ENCODE measurements at regions of chr5 and their contacts with region 1.

Region 1: GRCh38 chr5:59126708-59127573 is 544.1 kb downstream of the RAB3C start:
- DNase-seq: peak; percentile 34
- H3K4me3 Mint-ChIP-seq: no peak overlapping the region
- H3K27ac Mint-ChIP-seq: no peak overlapping the region
- H3K4me1 Mint-ChIP-seq: peaks cover 15% of the 10 kb centered on the region
- H3K27me3 Mint-ChIP-seq: no peaks in the 10 kb centered on the region

Region 2: DNA sequence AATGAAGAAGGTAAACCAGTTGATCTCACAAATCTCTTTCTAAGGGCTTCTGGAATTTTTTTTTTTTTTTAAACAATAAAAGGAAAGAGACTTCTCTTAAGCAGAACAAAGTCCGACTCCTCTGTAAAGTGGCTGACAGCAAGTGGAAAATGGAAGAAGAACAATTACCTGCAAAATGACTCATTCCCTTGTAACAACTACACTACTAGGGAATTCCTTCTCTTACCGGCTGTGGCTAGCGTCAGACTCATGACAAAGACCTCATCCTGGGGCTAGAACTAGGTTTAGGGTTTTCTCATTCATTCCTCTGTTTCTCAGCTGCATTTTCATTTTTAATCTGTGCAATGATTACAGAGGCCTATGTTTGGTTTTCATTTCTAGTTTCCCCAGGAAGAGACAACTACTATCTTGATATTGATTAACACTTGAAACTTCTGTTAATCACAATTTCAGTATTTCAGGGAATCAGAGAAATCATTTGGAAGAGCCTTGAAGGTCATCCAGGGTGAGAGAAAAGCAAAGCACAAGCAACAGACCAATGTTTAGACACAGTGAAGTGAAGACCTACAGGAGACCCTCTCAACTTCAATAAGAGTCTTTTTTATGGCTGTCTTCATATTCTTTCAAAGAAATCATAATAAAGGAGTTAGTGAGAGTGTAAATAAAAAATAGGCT is 106.2 kb before region 1 on chr5:
- intact Hi-C with region 1: loop called (anchors 1 kb)
- DNase-seq: no peak
- H3K4me3 Mint-ChIP-seq: peak overlapping the region; percentile 32
- H3K27ac Mint-ChIP-seq: peak overlapping the region; percentile 93
- H3K4me1 Mint-ChIP-seq: peaks cover 54% of the 10 kb centered on the region
- H3K27me3 Mint-ChIP-seq: no peaks in the 10 kb centered on the region

Region 3: DNA sequence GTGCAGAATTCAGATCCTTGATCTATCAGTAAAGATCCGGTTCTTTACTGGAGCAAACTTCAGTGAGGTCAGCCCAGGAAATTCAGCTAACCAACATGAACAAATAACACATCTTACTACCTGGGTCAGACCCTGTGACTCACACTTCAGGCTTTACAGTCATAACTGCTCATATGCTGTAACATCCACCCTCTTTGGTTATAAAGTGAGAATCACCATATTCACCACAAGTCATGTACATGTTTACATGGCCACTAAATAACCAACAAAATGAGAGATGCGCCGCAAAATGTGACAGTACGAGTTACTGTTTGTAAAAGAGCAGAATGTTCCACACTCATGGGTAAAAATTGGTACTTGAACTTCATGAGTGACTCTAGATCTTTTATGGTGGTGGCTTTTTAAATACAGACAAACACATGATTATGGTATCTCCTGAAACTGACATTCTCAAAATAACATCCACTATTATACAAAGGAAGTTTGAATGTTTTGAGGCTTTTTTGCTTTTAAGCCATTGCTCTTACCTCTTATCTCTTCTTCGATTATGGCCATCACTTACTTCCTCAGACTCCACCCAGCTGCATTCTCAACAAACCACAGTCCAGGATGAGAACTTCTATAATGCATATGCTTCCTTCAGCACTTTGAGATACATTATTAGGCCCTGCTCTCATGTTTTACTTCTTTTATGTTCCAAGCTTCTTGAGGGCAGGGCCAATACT is 27.5 kb before region 1 on chr5:
- intact Hi-C with region 1: loop called (anchors 1 kb)
- DNase-seq: peak; percentile 62
- H3K4me3 Mint-ChIP-seq: peak overlapping the region; percentile 22
- H3K27ac Mint-ChIP-seq: peak overlapping the region; percentile 85
- H3K4me1 Mint-ChIP-seq: peaks cover 80% of the 10 kb centered on the region
- H3K27me3 Mint-ChIP-seq: no peaks in the 10 kb centered on the region

Region 4: GRCh38 chr5:59143926-59144333 is 17.0 kb after region 1 on chr5:
- intact Hi-C with region 1: loop called (anchors 2 kb)
- DNase-seq: no peak
- H3K4me3 Mint-ChIP-seq: no peak overlapping the region
- H3K27ac Mint-ChIP-seq: no peak overlapping the region
- H3K4me1 Mint-ChIP-seq: peaks cover 8% of the 10 kb centered on the region
- H3K27me3 Mint-ChIP-seq: no peaks in the 10 kb centered on the region

Region 5: GRCh38 chr5:59152701-59153245 is 25.8 kb after region 1 on chr5:
- intact Hi-C with region 1: loop called (anchors 1 kb)
- DNase-seq: no peak
- H3K4me3 Mint-ChIP-seq: peak overlapping the region; percentile 16
- H3K27ac Mint-ChIP-seq: no peak overlapping the region
- H3K4me1 Mint-ChIP-seq: peaks cover 22% of the 10 kb centered on the region
- H3K27me3 Mint-ChIP-seq: no peaks in the 10 kb centered on the region

Region 6: GRCh38 chr5:59161221-59162105 is 34.5 kb after region 1 on chr5:
- intact Hi-C with region 1: loop called (anchors 1 kb)
- DNase-seq: no peak
- H3K4me3 Mint-ChIP-seq: no peak overlapping the region
- H3K27ac Mint-ChIP-seq: peak overlapping the region; percentile 48
- H3K4me1 Mint-ChIP-seq: peaks cover 34% of the 10 kb centered on the region
- H3K27me3 Mint-ChIP-seq: no peaks in the 10 kb centered on the region

Region 7: GRCh38 chr5:59174248-59174844 is 47.4 kb after region 1 on chr5:
- intact Hi-C with region 1: loop called (anchors 1 kb)
- DNase-seq: no peak
- H3K4me3 Mint-ChIP-seq: no peak overlapping the region
- H3K27ac Mint-ChIP-seq: no peak overlapping the region
- H3K4me1 Mint-ChIP-seq: peaks cover 43% of the 10 kb centered on the region
- H3K27me3 Mint-ChIP-seq: no peaks in the 10 kb centered on the region

Measured in activated T-helper 2 cell treated with anti-CD3 and anti-CD28 coated beads, Interferon-gamma antibody, Interleukin-2, Interleukin-4, amounts not matched to agents 10 μg/mL and 5 μg/mL and 100 μg/mL, durations not matched to agents 14 hours and 24 hours and 36 hours (primary cell).